ENCODE measurements at regions of chr19 and their contacts with region 1.

Region 1: DNA sequence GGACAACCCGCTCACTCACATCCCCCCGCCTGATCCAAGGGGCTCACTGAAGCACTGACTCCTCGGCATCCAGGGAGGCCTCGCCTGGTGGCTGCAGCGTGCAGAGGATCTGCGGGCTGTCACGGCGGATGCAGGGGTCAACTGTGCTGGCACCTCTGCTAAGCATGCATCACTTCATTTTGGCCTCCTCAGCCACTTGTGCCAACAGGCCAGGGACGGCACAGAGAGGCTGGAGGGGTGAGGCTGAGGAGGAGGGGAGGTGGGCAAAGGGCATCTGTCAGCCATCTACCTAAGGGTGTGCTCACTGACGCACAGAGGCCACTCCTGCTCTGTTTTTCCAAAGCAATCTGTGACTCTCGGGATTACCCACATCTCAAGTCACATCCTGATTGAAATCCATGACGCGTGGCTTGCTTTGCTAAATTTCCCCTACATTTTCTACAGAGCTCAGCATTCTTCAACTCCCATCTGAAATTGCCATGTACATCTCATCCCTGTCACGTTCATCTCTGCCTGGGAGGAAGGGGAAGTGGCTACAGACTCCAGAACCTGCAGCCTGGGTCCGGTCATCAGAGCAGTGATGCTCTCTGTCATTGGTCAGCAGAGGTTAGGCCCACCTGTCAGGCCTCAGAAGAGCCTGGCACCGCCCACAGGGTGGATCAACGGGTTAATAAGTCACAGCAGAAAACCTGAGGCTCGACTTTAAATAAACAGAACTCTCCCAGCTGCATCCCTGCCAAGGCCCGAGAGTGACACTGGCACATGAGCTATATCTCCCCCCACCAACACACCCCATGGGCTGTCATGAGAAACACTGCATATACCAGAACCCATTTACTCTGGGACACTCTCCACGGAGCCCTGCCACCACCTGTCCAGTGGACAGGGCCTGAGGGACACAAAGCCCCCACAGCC is 17.6 kb downstream of the ELL start:
- DNase-seq: no peak
- H3K4me3 ChIP-seq: no peak overlapping the region
- H3K4me3 Mint-ChIP-seq: peak overlapping the region in 6 of 8 donors; percentile 13 to 88 (median 60)
- H3K27ac ChIP-seq: peak overlapping the region; percentile 56
- H3K27ac Mint-ChIP-seq: peak overlapping the region; percentile 55 to 97 (median 80)
- H3K4me1 ChIP-seq: peaks cover 100% of the 10 kb centered on the region
- H3K4me1 Mint-ChIP-seq: peaks cover 70 to 100% (median 88%) of the 10 kb centered on the region in 4 donors
- H3K27me3 ChIP-seq: no peaks in the 10 kb centered on the region
- H3K27me3 Mint-ChIP-seq: no peaks in the 10 kb centered on the region

Region 2: GRCh38 chr19:18478569-18479311 is 25.5 kb before region 1 on chr19:
- CTCF ChIA-PET with region 1: interaction called, 5 read pairs
- POLR2A ChIA-PET with region 1: interaction called, 27 read pairs
- intact Hi-C with region 1: no loop called
- DNase-seq: peak in 3 of 5 donors; percentile 25 to 78 (median 33)
- H3K4me3 ChIP-seq: no peak overlapping the region
- H3K4me3 Mint-ChIP-seq: peak overlapping the region; percentile 53 to 80 (median 71)
- H3K27ac ChIP-seq: peak overlapping the region; percentile 63
- H3K27ac Mint-ChIP-seq: peak overlapping the region; percentile 89 to 95 (median 94)
- H3K4me1 ChIP-seq: peaks cover 88% of the 10 kb centered on the region
- H3K4me1 Mint-ChIP-seq: peaks cover 54 to 96% (median 78%) of the 10 kb centered on the region in 4 donors
- H3K27me3 ChIP-seq: no peaks in the 10 kb centered on the region
- H3K27me3 Mint-ChIP-seq: no peaks in the 10 kb centered on the region